ENCODE measurements at regions of chrX and their contacts with region 1.

Region 1: DNA sequence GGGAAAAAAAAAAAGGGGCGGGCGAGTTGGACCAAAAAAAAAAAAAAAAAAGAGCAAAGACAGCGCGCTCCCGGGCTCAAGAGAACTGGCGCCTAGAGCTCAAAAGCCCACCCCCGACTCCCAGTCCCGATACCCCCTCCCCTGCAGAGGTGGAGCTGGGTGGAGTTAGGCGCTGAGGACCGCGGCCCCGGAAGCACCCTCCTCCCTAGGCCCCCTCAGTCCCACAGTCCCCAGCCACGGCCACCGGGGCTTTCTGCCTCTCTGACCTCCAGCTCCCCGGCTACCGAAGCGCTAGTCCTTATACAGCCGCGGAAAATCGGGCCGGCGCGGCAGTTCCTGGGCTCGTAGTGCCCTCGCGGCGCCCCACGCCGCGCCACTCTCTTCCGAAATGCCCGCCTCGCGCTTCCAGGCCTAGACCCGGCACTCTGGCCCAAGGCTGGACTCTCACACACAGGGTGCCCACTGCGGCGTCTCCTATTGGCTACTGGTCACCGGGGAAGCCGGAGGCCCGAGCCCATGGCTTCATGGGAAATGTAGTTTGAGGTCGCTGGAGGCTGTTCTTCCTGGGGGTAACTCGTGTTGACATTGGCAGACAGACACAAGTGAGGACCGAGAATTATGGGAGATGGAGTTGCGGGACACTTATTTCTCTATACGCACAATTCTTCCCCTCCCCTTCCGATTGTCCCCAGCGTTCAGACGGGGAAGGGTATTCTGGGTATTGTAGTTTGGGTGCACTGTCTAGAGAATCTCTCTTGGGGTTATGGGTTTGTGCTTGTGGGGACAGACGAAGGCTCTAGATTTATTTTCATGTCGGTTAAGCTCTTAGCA is at the start of gene ENOX2:
- DNase-seq: peak; percentile 91 to 95
- H3K4me3 ChIP-seq: peak within 1 kb of the TSS; percentile 64
- H3K4me3 Mint-ChIP-seq: no peak within 1 kb of the TSS
- H3K27ac Mint-ChIP-seq: no peak within 1 kb of the TSS
- H3K4me1 ChIP-seq: no peaks in the 10 kb centered on the region; the same call in 1 of the 2 replicates
- H3K4me1 Mint-ChIP-seq: no peaks in the 10 kb centered on the region
- H3K27me3 ChIP-seq: no peaks in the 10 kb centered on the region
- H3K27me3 Mint-ChIP-seq: peaks cover 3% of the 10 kb centered on the region
- CTCF ChIP-seq: no peak
- total RNA-seq, gene ENOX2: 7.0 and 11.4 TPM in 2 replicates

Region 2: GRCh38 chrX:130401415-130402207 is 501.4 kb before region 1 on chrX and contains the start of gene RBMX2:
- CTCF ChIA-PET with region 1: no interaction called
- POLR2A ChIA-PET with region 1: no interaction called
- intact Hi-C with region 1: loop called (anchors 5 kb)
- DNase-seq: peak; percentile 67 to 78
- H3K4me3 ChIP-seq: peak within 1 kb of the TSS; percentile 80
- H3K4me3 Mint-ChIP-seq: peak within 1 kb of the TSS; percentile 99
- H3K27ac Mint-ChIP-seq: peak within 1 kb of the TSS; percentile 91
- H3K4me1 ChIP-seq: no peaks in the 10 kb centered on the region
- H3K4me1 Mint-ChIP-seq: no peaks in the 10 kb centered on the region
- H3K27me3 ChIP-seq: no peaks in the 10 kb centered on the region
- H3K27me3 Mint-ChIP-seq: no peaks in the 10 kb centered on the region
- CTCF ChIP-seq: no peak
- total RNA-seq, gene RBMX2: 21.3 and 22.6 TPM in 2 replicates

Measured in Caco-2 (cell line).